ENCODE measurements at regions of chr15 and their contacts with region 1.

Region 1: GRCh38 chr15:29925227-29926082 is 103.2 kb upstream of the TJP1 start:
- DNase-seq: peak; percentile 39 to 73 (median 60)
- ATAC-seq: peak; percentile 99
- H3K4me3 ChIP-seq: no peak overlapping the region
- H3K27ac ChIP-seq: no peak overlapping the region
- H3K4me1 ChIP-seq: no peaks in the 10 kb centered on the region
- H3K27me3 ChIP-seq: peaks cover 12 to 13% of the 10 kb centered on the region in 2 experiments; a peak in 4 of 5 replicates
- CTCF ChIP-seq: peak; percentile 92 to 99 (median 97)
- EP300 ChIP-seq: no peak
- POLR2A ChIP-seq: no peak
- RAD21 ChIP-seq: peak; percentile 57 to 89

Region 2: DNA sequence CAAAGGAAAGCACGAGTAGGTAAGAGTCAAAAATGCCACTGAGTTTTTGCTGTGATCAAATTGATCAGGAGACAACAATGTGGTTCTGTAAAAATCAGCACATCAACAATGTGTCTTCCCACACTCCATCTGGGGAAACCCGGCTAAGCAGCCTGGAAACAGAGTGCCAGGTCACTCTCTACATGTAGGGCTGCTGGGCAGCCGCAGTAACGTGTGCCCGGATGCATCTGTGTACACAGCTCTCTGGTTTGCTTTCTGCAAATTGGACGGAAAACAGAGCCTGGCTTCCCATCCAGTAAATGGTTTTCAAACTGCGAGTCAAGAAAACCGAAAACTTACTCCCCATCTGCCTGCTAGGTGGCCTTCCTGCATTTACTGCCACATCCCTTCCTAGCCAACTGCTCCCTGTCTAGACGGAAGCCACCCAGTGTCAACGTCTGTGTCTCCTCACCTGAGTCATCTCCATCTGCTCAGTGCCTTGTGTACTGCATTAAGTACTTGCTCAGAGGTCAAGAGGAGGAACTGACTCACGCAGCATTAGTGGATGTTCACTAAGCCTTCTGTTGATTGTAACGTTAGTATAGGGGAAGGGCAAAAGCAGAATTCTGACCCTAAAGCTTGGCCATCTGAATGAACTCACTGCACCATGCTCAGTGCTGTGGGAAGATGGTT is 227.3 kb before region 1 on chr15:
- CTCF ChIA-PET with region 1: interaction called, 4 read pairs
- POLR2A ChIA-PET with region 1: no interaction called
- in situ Hi-C with region 1: loop called (anchors 10 kb)
- intact Hi-C with region 1: loop called (anchors 1 kb)
- DNase-seq: no peak
- ATAC-seq: peak; percentile 29; the same call in 2 of the 3 replicates
- H3K4me3 ChIP-seq: no peak overlapping the region
- H3K27ac ChIP-seq: no peak overlapping the region
- H3K4me1 ChIP-seq: no peaks in the 10 kb centered on the region
- H3K27me3 ChIP-seq: no peaks in the 10 kb centered on the region
- CTCF ChIP-seq: no peak
- EP300 ChIP-seq: no peak
- POLR2A ChIP-seq: peak; percentile 33
- RAD21 ChIP-seq: no peak

Region 3: DNA sequence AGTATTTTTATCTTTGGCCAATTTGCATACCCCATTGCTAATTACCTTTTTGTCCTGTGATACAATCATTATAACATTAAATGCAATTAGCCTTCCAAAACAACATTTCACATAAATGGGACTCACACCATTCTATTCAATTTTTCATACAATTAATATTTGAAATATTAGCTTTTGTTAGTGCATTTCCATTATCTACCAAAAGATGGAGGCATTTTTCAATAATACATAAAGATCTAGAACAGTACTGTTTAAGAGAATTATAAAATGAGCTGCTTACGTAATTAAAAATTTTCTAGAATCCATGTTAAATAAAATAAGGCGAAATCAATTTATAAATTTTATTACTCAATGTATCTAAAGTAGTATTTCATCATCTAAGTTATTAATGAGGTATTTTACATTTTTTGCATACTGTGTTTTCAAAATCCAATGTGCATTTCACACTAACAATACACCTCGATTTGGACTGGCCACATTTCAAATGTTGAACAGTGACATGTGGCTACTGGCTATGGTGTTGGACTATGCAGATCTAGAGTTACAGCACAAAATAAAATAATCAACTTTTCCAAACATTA is 177.5 kb before region 1 on chr15:
- CTCF ChIA-PET with region 1: interaction called, 18 read pairs
- POLR2A ChIA-PET with region 1: interaction called, 3 read pairs
- in situ Hi-C with region 1: no loop called
- intact Hi-C with region 1: loop called (anchors 1 kb)
- DNase-seq: no peak
- ATAC-seq: no peak
- H3K4me3 ChIP-seq: no peak overlapping the region
- H3K27ac ChIP-seq: no peak overlapping the region
- H3K4me1 ChIP-seq: no peaks in the 10 kb centered on the region
- H3K27me3 ChIP-seq: no peaks in the 10 kb centered on the region
- CTCF ChIP-seq: peak in 2 of 3 experiments; percentile 16 to 55; a peak in 3 of 6 replicates
- EP300 ChIP-seq: no peak
- POLR2A ChIP-seq: no peak
- RAD21 ChIP-seq: peak; percentile 46 to 62

Region 4: DNA sequence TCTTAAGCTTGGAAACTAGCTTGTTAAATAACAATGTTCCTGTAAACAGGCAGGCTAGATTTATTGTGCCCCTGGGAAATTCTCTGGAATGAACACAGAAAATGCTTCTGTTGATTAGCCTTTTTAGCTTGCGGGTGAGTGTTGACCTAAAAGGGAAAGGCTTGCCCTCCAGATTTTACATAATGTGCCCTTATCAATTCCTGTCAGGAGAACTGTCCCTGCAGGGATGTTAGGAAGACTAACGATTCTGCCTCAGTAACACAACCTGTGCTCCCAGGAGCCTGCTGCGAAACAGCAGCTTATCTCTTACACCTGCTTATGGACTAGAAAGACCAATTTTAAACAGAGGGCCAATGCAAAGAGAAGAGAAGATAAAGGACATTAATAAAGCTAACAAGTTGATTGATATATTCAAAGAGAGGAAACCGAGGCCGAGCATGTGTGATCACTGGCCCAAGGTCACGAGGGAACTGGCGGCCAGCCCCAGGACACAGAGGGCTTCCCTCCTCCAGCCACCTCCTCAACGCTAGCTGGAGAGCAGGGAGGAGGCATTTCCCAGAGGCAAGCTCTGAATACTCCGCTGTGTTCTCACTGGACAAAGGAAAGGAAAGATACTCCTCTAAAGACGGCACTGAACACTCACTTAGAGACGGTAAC is 54.8 kb before region 1 on chr15:
- CTCF ChIA-PET with region 1: no interaction called
- POLR2A ChIA-PET with region 1: no interaction called
- in situ Hi-C with region 1: no loop called
- intact Hi-C with region 1: no loop called
- DNase-seq: no peak
- ATAC-seq: no peak
- H3K4me3 ChIP-seq: no peak overlapping the region
- H3K27ac ChIP-seq: no peak overlapping the region
- H3K4me1 ChIP-seq: peaks cover 0 to 3% of the 10 kb centered on the region in 2 experiments; a peak in 2 of 5 replicates
- H3K27me3 ChIP-seq: peaks cover 34 to 39% of the 10 kb centered on the region in 2 experiments
- CTCF ChIP-seq: no peak
- EP300 ChIP-seq: no peak
- POLR2A ChIP-seq: no peak
- RAD21 ChIP-seq: no peak